ENCODE measurements at regions of chr1 and their contacts with region 1.

Region 1: GRCh38 chr1:31848381-31848897 is 32.6 kb upstream of the SPOCD1 start:
- DNase-seq: peak; percentile 61
- ATAC-seq: peak; percentile 86
- H3K4me3 Mint-ChIP-seq: peak overlapping the region; percentile 73
- H3K27ac Mint-ChIP-seq: peak overlapping the region; percentile 94
- H3K4me1 Mint-ChIP-seq: peaks cover 44% of the 10 kb centered on the region
- H3K27me3 Mint-ChIP-seq: peaks cover 2% of the 10 kb centered on the region

Region 2: GRCh38 chr1:31828341-31828740 is 20.1 kb before region 1 on chr1:
- POLR2A ChIA-PET with region 1: interaction called, 23 read pairs
- DNase-seq: no peak
- ATAC-seq: peak; percentile 23
- H3K4me3 Mint-ChIP-seq: peak overlapping the region; percentile 37
- H3K27ac Mint-ChIP-seq: peak overlapping the region; percentile 91
- H3K4me1 Mint-ChIP-seq: peaks cover 24% of the 10 kb centered on the region
- H3K27me3 Mint-ChIP-seq: no peaks in the 10 kb centered on the region

Region 3: GRCh38 chr1:32005522-32005921 is 157.1 kb after region 1 on chr1:
- POLR2A ChIA-PET with region 1: no interaction called
- DNase-seq: no peak
- ATAC-seq: no peak
- H3K4me3 Mint-ChIP-seq: no peak overlapping the region
- H3K27ac Mint-ChIP-seq: no peak overlapping the region
- H3K4me1 Mint-ChIP-seq: peaks cover 12% of the 10 kb centered on the region
- H3K27me3 Mint-ChIP-seq: peaks cover 4% of the 10 kb centered on the region

Region 4: GRCh38 chr1:32031578-32032274 is 183.3 kb after region 1 on chr1:
- POLR2A ChIA-PET with region 1: no interaction called
- DNase-seq: no peak
- ATAC-seq: no peak
- H3K4me3 Mint-ChIP-seq: no peak overlapping the region
- H3K27ac Mint-ChIP-seq: no peak overlapping the region
- H3K4me1 Mint-ChIP-seq: peaks cover 29% of the 10 kb centered on the region
- H3K27me3 Mint-ChIP-seq: no peaks in the 10 kb centered on the region

Measured in activated naive CD8-positive, alpha-beta T cell treated with anti-CD3 and anti-CD28 coated beads, Interleukin-2, amount 10 ng/mL, durations not matched to agents 7 days and 5 days (primary cell).